HepG2 (cell line): ENCODE measurements at regions of chr1 and their contacts with region 1.

Region 1: DNA sequence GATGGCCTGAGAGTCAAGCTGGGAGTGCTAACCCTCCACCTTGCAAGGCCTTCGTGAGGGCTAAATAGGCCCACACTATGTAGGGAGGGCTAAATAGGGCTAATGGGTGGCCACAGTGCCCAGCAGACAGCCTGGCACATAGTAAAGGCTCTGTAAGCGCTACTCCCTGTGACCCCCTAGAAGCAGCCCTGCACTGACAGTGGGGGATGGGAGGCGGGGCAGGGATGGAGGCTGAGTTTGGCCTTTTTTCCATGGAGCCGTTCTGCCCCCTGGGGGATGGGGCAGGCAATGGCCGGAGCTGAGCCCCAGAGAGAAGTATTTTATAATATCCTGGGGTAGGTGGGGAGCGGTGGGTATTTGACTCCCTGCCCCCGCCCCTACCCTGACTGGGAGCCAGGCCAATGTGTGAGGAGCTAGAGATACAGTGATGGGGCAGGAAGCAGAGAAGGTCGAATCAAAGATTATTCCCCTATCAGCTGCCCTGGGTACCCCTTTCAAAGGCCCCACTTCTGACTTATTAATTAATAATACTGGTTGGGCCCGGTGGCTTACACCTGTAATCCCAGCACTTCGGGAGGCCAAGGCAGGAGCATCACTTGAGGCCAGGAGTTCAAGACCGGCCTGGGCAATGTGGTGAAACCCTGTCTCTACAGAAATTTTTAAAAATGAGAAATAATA is 42.3 kb downstream of the LACTBL1 start:
- DNase-seq: peak; percentile 29
- ATAC-seq: peak; percentile 91
- H3K4me3 ChIP-seq: no peak overlapping the region
- H3K27ac ChIP-seq: no peak overlapping the region
- H3K4me1 ChIP-seq: no peaks in the 10 kb centered on the region
- H3K27me3 ChIP-seq: peaks cover 0 to 7% of the 10 kb centered on the region in 2 experiments; a peak in 2 of 5 replicates
- CTCF ChIP-seq: peak; percentile 84
- EP300 ChIP-seq: no peak
- POLR2A ChIP-seq: no peak
- RAD21 ChIP-seq: peak; percentile 90

Region 2: DNA sequence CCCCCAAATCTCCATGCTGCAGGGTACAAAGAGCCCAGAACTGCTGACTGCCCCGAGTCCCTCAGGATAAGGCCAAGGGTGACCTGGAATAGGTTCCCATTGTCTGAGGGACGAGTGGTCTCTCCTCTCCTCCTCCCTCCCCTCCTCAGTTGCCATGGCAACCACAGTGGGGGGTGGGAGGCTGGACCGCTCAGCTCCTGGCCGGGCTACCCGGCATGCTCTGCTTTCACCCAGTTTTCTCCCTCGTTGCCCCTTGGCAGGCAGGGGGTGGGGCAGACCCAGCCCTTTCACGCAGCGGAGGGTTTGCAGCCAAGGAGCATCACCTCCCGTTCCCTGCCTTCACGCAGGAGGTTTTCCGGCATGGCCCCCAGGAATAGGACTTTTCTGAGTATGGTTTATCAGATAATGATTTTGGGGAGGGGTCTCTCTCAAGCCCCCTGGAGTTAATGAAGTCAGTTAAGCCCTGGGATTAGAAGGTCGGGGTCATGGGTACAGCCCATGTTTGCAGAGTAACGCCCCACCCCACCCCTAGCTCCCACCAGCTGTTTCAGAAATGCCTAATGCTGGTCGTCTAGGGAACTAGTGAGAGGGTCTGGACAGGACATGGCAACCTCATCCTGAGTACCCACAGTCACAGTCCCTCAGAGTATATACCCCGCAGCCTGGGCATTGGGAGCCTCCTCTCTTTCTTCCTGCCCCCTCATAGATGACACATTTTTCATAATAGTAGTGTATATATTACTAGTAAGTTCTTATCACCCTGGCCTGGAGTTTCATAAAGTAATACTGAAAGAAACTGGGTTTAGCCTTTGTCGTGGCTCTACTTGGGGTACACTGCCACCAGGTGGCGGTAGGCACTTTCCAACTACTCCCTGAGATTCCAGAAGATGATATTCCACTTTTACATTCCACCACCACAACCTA is 256.6 kb before region 1 on chr1:
- CTCF ChIA-PET with region 1: interaction called, 17 read pairs
- POLR2A ChIA-PET with region 1: no interaction called
- in situ Hi-C with region 1: no loop called
- intact Hi-C with region 1: no loop called
- DNase-seq: peak; percentile 12
- ATAC-seq: peak; percentile 51; the same call in 2 of the 3 replicates
- H3K4me3 ChIP-seq: no peak overlapping the region
- H3K27ac ChIP-seq: no peak overlapping the region
- H3K4me1 ChIP-seq: no peaks in the 10 kb centered on the region
- H3K27me3 ChIP-seq: peaks cover 3 to 6% of the 10 kb centered on the region in 2 experiments; a peak in 1 of 5 replicates
- CTCF ChIP-seq: peak; percentile 68
- EP300 ChIP-seq: no peak
- POLR2A ChIP-seq: no peak
- RAD21 ChIP-seq: peak; percentile 62

Region 3: DNA sequence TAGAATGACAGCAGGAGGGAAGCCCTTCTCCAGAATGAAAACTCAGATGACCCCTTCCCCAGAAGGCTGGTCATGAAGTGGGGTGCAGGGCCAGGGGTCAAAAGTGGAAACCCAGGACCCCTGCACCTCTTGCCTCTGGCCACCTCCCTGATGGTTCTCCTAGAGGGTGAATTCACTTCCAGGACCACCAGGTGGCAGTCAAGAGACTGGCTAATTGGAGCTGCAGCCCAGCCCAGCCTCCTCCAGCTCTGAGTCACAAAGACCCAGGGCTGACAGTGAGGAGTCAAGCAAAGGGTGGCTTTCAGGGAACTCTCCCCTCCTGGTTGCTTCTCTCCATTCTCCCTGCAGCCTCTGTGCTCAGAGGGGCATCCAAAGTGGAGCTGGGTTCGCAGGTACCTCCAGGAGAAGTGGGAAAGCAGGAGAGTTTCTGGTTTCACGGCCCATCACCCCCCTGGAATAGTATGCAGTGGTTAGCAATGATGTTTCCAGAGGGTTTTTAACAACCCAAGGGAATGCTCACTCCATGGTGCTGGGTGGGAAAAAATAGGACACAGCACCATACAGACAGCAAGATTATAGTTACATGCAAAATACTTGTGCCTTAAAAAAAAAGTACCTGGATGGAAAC is 225.8 kb before region 1 on chr1:
- CTCF ChIA-PET with region 1: interaction called, 14 read pairs
- POLR2A ChIA-PET with region 1: no interaction called
- in situ Hi-C with region 1: no loop called
- intact Hi-C with region 1: loop called (anchors 1 kb)
- DNase-seq: peak; percentile 72
- ATAC-seq: peak; percentile 95
- H3K4me3 ChIP-seq: no peak overlapping the region
- H3K27ac ChIP-seq: no peak overlapping the region
- H3K4me1 ChIP-seq: peaks cover 12% of the 10 kb centered on the region
- H3K27me3 ChIP-seq: peaks cover 0 to 4% of the 10 kb centered on the region in 2 experiments; a peak in 2 of 5 replicates
- CTCF ChIP-seq: peak; percentile 88
- EP300 ChIP-seq: no peak
- POLR2A ChIP-seq: no peak
- RAD21 ChIP-seq: peak; percentile 72

Region 4: DNA sequence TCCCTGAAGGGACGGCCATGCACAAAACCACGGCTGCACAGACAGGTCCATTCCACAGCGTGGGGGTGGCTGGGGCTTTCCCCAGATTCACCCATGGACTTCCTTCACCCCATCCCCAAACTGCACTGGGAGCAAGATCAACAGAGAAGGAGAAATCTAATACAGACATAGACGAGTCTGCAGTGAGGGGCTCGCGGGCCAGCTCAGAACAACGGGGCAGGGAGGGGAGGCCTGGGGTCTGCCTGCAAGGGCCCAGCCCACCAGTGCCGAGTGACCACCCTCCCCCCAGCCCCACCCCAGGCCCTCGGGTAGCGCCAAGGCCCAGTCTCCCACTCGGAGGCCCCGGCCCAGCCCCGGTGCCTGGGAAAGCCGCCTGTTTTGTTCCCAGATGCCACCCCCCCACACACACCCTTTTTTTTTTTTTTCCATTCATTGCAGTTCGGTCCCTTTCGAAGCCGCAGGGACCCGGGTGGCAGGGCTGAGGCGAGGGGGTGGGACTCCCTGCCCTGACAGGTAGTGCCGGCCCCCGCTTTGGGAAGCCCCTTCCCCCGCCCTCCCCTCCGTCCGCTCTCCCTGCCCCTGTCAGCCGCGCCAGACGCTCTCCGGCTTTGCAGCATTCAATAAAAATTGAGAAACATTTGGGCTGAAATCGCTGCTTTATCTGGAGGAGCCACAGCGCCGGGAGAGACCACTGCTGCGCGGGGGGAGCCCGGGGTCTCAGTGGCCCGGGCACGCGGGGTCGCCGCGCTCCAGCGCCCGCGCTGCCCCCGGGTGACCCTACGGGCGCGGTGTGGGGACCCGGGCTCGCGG is 220.3 kb before region 1 on chr1:
- CTCF ChIA-PET with region 1: interaction called, 14 read pairs
- POLR2A ChIA-PET with region 1: no interaction called
- in situ Hi-C with region 1: no loop called
- intact Hi-C with region 1: loop called (anchors 1 kb)
- DNase-seq: no peak
- ATAC-seq: peak; percentile 25; the same call in 2 of the 3 replicates
- H3K4me3 ChIP-seq: peak overlapping the region in 2 of 3 experiments; percentile 41 to 48; a peak in 4 of 6 replicates
- H3K27ac ChIP-seq: no peak overlapping the region
- H3K4me1 ChIP-seq: no peaks in the 10 kb centered on the region
- H3K27me3 ChIP-seq: peaks cover 11 to 45% of the 10 kb centered on the region in 2 experiments
- CTCF ChIP-seq: no peak
- EP300 ChIP-seq: no peak
- POLR2A ChIP-seq: no peak
- RAD21 ChIP-seq: no peak

Region 5: GRCh38 chr1:22903113-22903512 is 27.3 kb before region 1 on chr1:
- CTCF ChIA-PET with region 1: no interaction called
- POLR2A ChIA-PET with region 1: no interaction called
- in situ Hi-C with region 1: no loop called
- intact Hi-C with region 1: no loop called
- DNase-seq: no peak
- ATAC-seq: no peak
- H3K4me3 ChIP-seq: no peak overlapping the region
- H3K27ac ChIP-seq: no peak overlapping the region
- H3K4me1 ChIP-seq: no peaks in the 10 kb centered on the region
- H3K27me3 ChIP-seq: peaks cover 0 to 20% of the 10 kb centered on the region in 2 experiments; a peak in 3 of 5 replicates
- CTCF ChIP-seq: no peak
- EP300 ChIP-seq: no peak
- POLR2A ChIP-seq: no peak
- RAD21 ChIP-seq: no peak

Region 6: DNA sequence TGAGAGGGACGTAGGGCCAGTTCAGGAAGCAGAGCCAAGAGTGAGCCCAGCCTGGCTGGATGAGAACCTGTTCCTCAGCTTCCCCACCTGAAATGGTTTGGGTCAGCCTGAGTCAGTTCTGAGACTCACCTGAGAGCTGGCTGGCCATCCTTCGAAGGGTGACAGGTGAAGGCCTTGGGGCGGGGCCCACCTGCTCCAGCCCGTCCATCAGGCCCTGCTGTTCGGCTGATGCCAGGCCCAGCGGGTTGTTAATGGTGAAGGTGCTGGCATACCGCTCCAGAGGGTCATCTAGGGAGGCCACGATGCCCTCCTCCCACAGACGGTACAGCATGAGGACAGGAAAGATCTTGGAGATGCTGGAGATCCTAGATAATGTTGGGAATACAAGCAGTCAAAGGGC is 28.2 kb after region 1 on chr1:
- CTCF ChIA-PET with region 1: no interaction called
- POLR2A ChIA-PET with region 1: no interaction called
- in situ Hi-C with region 1: no loop called
- intact Hi-C with region 1: no loop called
- DNase-seq: no peak
- ATAC-seq: no peak
- H3K4me3 ChIP-seq: no peak overlapping the region
- H3K27ac ChIP-seq: no peak overlapping the region
- H3K4me1 ChIP-seq: peaks cover 31% of the 10 kb centered on the region
- H3K27me3 ChIP-seq: no peaks in the 10 kb centered on the region
- CTCF ChIP-seq: no peak
- EP300 ChIP-seq: no peak
- POLR2A ChIP-seq: no peak
- RAD21 ChIP-seq: no peak

Region 7: GRCh38 chr1:22969304-22969709 is 38.9 kb after region 1 on chr1:
- CTCF ChIA-PET with region 1: no interaction called
- POLR2A ChIA-PET with region 1: no interaction called
- in situ Hi-C with region 1: no loop called
- intact Hi-C with region 1: loop called (anchors 1 kb)
- DNase-seq: no peak
- ATAC-seq: peak; percentile 45; the same call in 2 of the 3 replicates
- H3K4me3 ChIP-seq: no peak overlapping the region
- H3K27ac ChIP-seq: no peak overlapping the region
- H3K4me1 ChIP-seq: peaks cover 15% of the 10 kb centered on the region
- H3K27me3 ChIP-seq: no peaks in the 10 kb centered on the region
- CTCF ChIP-seq: no peak
- EP300 ChIP-seq: no peak
- POLR2A ChIP-seq: no peak
- RAD21 ChIP-seq: no peak